Caco-2 (cell line): ENCODE measurements at regions of chr6 and their contacts with region 1.

Region 1: DNA sequence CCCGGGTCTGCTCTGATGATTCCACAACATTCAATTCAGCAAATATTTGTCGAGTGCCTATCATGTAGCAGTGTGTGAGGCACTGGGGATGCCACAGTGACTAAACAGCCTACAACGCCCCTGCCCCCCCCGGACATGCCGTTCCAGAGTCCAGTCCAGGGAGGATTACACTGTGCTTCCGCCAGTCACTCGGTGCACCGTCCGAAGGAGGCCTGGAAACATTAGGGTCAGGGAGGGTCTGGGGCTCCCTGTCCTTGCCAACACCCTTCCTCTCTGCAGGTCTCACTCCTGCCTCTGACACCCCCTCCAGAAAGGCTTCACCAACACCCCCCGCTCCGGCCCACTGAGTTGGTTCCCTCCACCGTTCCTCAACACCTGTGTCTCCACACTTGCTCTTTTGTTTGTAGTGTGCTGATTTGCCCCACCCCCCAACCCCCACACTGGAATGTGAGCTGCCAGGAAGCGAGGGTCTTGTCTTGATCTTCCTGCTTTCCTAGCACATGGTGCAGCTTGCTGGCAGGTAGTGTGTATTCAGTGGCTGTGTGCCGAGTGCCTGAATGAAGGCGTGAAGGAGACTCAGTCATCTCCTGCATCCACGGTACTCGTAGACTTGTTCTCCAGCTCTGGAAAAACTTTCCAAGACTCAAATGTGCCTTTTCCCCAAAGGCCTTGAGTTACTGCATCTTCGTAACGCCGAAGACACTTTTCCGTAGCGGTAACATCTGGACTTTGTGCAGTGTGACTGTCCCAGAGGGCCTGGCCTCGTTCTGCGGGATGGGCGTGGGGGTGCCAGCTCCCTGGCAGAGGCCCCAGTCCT is 150.4 kb downstream of the ZDHHC14 start:
- DNase-seq: peak; percentile 96 to 98
- H3K4me3 ChIP-seq: peak overlapping the region; percentile 33
- H3K4me3 Mint-ChIP-seq: peak overlapping the region; percentile 77
- H3K27ac Mint-ChIP-seq: peak overlapping the region; percentile 98
- H3K4me1 ChIP-seq: peaks cover 59% of the 10 kb centered on the region
- H3K4me1 Mint-ChIP-seq: peaks cover 45% of the 10 kb centered on the region
- H3K27me3 ChIP-seq: no peaks in the 10 kb centered on the region
- H3K27me3 Mint-ChIP-seq: no peaks in the 10 kb centered on the region
- CTCF ChIP-seq: no peak

Region 2: DNA sequence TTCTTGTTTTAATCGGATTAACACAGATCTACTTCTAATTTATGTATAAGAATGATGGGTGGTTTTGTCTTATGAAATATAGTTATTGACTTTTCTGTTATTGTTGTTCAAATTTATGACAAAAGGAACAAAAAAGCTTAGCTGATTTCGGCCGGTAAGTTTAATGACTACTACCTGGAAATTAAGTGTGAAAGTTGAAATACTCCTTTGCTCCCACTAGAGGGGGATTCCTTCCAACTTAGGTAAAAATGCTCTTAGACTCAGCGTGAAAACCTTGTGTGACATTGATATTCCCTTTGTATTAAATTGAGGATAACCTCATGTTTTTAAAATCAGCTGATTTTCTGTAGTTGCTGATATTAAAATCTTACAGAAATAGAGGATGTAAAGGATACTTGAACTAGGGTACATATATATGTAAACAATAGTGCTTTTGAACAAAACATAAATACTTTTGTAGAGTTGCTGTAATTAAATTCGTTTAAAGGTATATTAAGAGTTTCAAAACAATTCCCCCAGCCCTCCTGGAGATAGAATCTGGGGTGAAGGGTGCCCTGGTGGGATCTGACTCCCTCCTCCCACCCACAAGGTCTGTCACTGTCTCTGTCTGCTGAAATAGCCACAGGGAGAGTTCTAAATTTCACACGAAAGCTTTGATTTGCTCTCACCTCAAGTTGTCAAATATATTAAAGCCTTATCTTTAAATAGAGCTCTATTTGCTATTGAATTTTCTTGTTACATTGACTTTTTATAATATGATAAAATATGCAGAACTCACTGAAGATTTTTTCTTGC is 496.7 kb before region 1 on chr6:
- CTCF ChIA-PET with region 1: no interaction called
- POLR2A ChIA-PET with region 1: no interaction called
- intact Hi-C with region 1: no loop called
- DNase-seq: peak in 1 of 2 experiments; percentile 16
- H3K4me3 ChIP-seq: no peak overlapping the region
- H3K4me3 Mint-ChIP-seq: no peak overlapping the region
- H3K27ac Mint-ChIP-seq: no peak overlapping the region
- H3K4me1 ChIP-seq: peaks cover 11% of the 10 kb centered on the region
- H3K4me1 Mint-ChIP-seq: no peaks in the 10 kb centered on the region
- H3K27me3 ChIP-seq: no peaks in the 10 kb centered on the region
- H3K27me3 Mint-ChIP-seq: no peaks in the 10 kb centered on the region
- CTCF ChIP-seq: peak; percentile 65 to 73

Region 3: DNA sequence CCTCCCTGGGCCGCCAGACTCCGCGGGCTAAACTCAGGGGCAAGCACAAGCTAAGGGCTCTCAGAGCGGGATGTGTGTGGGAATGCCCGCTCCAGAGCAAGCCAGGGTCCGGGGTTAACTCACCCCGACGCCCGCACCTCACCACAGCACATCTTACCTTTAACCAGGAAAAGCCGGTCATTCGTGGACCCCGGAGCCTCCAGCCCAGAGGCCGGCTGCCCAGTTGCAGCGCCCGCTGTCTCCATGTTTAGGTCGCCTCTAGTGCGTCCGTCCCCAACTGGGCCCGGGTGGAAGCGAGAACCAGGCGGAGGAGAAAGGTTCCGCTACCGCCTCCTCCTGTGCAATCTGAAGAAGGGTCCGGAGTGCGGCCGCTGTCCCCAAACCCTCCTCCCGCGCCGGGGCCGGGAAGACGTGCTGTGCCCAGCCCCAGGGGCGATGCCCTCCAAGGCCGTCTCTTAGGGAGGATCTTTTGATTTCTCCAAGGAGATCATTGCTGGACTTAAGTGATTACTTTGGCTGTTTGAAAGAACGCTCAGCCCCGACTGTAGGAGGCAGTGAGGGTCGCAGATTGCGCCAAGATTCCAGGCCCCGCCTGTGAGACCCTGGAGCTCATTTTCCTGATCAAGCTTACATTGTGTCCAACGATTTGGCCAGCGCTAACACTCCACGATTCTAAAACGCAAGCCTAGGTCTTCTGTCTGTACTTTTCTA is 208.0 kb before region 1 on chr6 and contains the start of gene TMEM242:
- CTCF ChIA-PET with region 1: interaction called, 3 read pairs
- POLR2A ChIA-PET with region 1: interaction called, 10 read pairs
- intact Hi-C with region 1: loop called (anchors 1 kb)
- DNase-seq: peak; percentile 92 to 94
- H3K4me3 ChIP-seq: peak within 1 kb of the TSS; percentile 72
- H3K4me3 Mint-ChIP-seq: peak within 1 kb of the TSS; percentile 87
- H3K27ac Mint-ChIP-seq: peak within 1 kb of the TSS; percentile 93
- H3K4me1 ChIP-seq: peaks cover 14% of the 10 kb centered on the region; the same call in 1 of the 2 replicates
- H3K4me1 Mint-ChIP-seq: peaks cover 9% of the 10 kb centered on the region
- H3K27me3 ChIP-seq: no peaks in the 10 kb centered on the region
- H3K27me3 Mint-ChIP-seq: no peaks in the 10 kb centered on the region
- CTCF ChIP-seq: peak; percentile 13 to 43
- total RNA-seq, gene TMEM242: 12.1 and 12.6 TPM in 2 replicates

Region 4: GRCh38 chr6:157339432-157339831 is 191.9 kb before region 1 on chr6:
- CTCF ChIA-PET with region 1: interaction called, 3 read pairs
- POLR2A ChIA-PET with region 1: no interaction called
- intact Hi-C with region 1: loop called (anchors 5 kb)
- DNase-seq: no peak
- H3K4me3 ChIP-seq: no peak overlapping the region
- H3K4me3 Mint-ChIP-seq: no peak overlapping the region
- H3K27ac Mint-ChIP-seq: no peak overlapping the region
- H3K4me1 ChIP-seq: 0 out of 2 replicates have a peak, but pooled peaks cover 4% of the 10 kb centered on the region
- H3K4me1 Mint-ChIP-seq: no peaks in the 10 kb centered on the region
- H3K27me3 ChIP-seq: no peaks in the 10 kb centered on the region
- H3K27me3 Mint-ChIP-seq: no peaks in the 10 kb centered on the region
- CTCF ChIP-seq: peak in 1 of 2 experiments; percentile 30

Region 5: DNA sequence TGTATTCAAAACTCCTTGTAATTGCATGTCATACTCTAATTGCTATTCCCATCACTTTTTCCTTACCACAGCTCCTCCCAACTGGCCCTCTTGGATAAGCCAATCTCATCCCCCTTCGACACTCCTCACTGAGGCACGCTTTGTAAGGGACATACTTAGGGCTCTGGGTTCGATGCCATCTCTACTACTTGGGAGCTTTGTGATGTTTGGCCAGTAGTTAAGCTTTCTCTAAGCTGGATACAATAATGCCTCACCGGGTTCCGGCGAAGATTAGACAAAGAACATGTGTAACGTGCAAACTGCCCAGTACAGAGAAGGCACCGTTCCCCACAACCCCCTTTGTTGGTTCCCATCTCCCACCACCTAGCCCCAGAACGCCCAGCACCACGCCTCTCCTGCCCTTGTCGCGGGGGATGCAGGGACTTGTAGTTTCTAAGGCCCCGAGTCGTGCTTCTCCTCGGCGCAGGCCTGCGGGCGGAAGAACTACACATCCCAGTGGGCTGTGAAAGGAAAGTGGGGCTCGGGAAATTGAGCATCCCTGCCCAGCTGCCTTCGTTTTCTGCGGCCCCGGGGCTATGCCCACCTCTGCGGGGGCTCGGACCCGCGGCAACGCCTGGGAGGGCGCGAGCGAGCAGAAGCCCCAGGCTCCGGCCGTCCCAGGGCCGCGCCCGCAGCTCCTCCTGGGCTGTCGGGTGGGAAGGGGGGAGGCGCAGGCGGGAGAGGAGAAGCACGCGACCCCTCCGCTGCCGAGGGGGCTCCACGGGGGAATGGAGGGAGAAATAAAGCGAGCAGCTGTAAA is 151.5 kb before region 1 on chr6:
- CTCF ChIA-PET with region 1: no interaction called
- POLR2A ChIA-PET with region 1: interaction called, 3 read pairs
- intact Hi-C with region 1: loop called (anchors 2 kb)
- DNase-seq: peak; percentile 88
- H3K4me3 ChIP-seq: peak overlapping the region; percentile 98
- H3K4me3 Mint-ChIP-seq: peak overlapping the region; percentile 83
- H3K27ac Mint-ChIP-seq: no peak overlapping the region
- H3K4me1 ChIP-seq: peaks cover 7% of the 10 kb centered on the region; the same call in 1 of the 2 replicates
- H3K4me1 Mint-ChIP-seq: peaks cover 31% of the 10 kb centered on the region
- H3K27me3 ChIP-seq: no peaks in the 10 kb centered on the region
- H3K27me3 Mint-ChIP-seq: no peaks in the 10 kb centered on the region
- CTCF ChIP-seq: no peak

Region 6: DNA sequence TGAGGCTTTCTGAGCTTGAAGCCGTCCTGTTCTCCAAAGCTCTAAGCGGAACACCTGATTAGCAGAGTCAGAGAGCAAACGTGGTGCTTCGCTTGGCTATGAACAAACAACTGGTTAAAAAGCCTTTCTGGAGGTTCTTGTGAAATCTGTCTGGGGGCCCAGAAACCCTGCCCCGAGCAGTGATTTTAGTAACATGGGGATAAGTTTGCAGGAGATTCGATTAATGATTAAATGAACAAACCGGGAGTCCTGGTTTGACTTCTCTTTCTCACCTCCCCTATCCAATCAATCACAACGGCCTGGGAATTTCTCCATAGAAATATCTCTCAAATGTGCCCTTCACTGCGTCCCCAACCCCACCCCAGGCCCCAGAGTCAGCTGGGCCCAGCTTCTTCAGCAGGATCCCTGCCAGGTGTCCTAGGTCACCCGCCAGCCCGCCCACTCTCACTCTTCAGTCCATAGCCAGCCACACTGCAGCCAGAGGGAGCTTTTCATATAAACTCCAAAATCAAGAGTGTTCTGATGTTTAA is 106.8 kb before region 1 on chr6:
- CTCF ChIA-PET with region 1: no interaction called
- POLR2A ChIA-PET with region 1: interaction called, 6 read pairs
- intact Hi-C with region 1: loop called (anchors 1 kb)
- DNase-seq: peak; percentile 77 to 82
- H3K4me3 ChIP-seq: 0 out of 2 replicates have a peak overlapping the region, but pooled peaks have one; percentile 5
- H3K4me3 Mint-ChIP-seq: peak overlapping the region; percentile 63
- H3K27ac Mint-ChIP-seq: peak overlapping the region; percentile 92
- H3K4me1 ChIP-seq: peaks cover 29% of the 10 kb centered on the region
- H3K4me1 Mint-ChIP-seq: peaks cover 56% of the 10 kb centered on the region
- H3K27me3 ChIP-seq: no peaks in the 10 kb centered on the region
- H3K27me3 Mint-ChIP-seq: no peaks in the 10 kb centered on the region
- CTCF ChIP-seq: peak in 1 of 2 experiments; percentile 17

Region 7: GRCh38 chr6:157449610-157450009 is 81.8 kb before region 1 on chr6:
- CTCF ChIA-PET with region 1: no interaction called
- POLR2A ChIA-PET with region 1: interaction called, 8 read pairs
- intact Hi-C with region 1: loop called (anchors 1 kb)
- DNase-seq: no peak
- H3K4me3 ChIP-seq: no peak overlapping the region
- H3K4me3 Mint-ChIP-seq: peak overlapping the region; percentile 36
- H3K27ac Mint-ChIP-seq: peak overlapping the region; percentile 41
- H3K4me1 ChIP-seq: peaks cover 13% of the 10 kb centered on the region
- H3K4me1 Mint-ChIP-seq: peaks cover 11% of the 10 kb centered on the region
- H3K27me3 ChIP-seq: no peaks in the 10 kb centered on the region
- H3K27me3 Mint-ChIP-seq: no peaks in the 10 kb centered on the region
- CTCF ChIP-seq: no peak

Region 8: GRCh38 chr6:157585274-157586087 is 54.1 kb after region 1 on chr6:
- CTCF ChIA-PET with region 1: interaction called, 4 read pairs
- POLR2A ChIA-PET with region 1: interaction called, 19 read pairs
- intact Hi-C with region 1: loop called (anchors 1 kb)
- DNase-seq: no peak
- H3K4me3 ChIP-seq: no peak overlapping the region
- H3K4me3 Mint-ChIP-seq: peak overlapping the region; percentile 50
- H3K27ac Mint-ChIP-seq: peak overlapping the region; percentile 92
- H3K4me1 ChIP-seq: peaks cover 27% of the 10 kb centered on the region
- H3K4me1 Mint-ChIP-seq: peaks cover 32% of the 10 kb centered on the region
- H3K27me3 ChIP-seq: no peaks in the 10 kb centered on the region
- H3K27me3 Mint-ChIP-seq: no peaks in the 10 kb centered on the region
- CTCF ChIP-seq: no peak